ENCODE measurements at regions of chr12 and their contacts with region 1.

Region 1: DNA sequence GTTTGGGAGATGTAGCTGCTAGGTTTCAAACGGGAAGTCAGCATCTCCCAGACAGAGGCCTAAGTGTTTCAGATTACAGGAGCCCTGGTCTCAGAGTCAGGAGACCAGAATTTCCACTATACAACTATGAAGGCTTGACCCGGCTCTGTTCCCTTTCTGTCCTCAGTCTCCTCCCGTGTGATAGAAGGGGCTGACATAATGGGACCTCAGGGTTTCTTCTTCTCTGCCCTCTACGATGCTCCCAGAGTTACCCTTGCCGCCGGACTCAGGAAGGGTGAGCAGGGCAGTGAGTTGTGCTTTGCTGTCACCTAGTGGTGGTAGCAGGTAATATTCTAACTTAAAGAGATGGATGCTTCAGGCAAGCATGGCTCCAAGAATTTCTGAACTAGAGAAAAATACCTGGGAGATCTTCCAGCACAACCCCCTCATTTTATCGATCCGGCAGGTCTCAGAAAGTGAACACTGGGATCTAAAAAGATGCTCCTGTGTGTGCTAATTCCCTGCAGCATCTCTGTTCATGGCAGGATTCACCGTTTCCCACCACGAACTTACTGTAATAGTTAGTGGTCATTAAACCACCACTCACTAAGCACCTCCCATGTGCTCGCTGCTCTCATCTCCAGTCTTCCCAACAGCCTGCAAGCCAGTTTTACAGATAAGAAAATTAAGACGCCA is 84.4 kb downstream of the VWF start:
- DNase-seq: no peak
- ATAC-seq: peak; percentile 79

Region 2: GRCh38 chr12:5733136-5733755 is 306.8 kb before region 1 on chr12:
- intact Hi-C with region 1: no loop called
- DNase-seq: no peak
- ATAC-seq: no peak

Region 3: DNA sequence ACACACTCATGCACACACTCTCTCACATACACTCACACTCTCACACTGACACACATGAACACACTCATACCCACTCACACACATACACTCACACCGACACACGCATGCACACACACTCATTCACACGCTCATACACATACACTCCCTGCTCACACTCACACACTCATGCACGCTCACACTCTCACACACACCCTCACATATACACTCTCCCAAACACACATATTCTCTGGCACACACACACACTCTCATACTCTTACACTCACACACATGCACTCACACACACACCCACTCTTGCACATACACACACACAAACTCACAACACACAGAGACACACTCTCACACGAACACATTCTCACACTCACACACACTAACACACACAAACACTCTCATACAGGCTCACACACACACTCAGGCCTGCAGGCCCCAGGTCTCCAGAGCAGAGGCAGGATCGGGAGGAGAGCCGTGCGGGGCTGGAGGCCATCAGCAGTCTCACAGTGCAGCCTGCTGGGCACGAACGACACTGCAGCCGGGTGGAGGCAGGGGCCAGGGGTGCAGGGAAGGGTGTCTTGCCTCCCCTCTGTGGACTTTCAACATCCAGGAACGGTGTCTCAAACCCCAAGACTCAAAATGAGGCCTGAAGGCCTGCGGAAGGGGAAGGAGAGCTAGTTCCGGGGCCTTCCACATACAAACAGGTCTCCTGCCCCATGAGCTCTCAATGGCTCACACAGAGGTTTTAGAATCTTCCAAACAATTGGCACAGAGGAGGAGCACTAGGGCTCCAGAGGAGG is 243.7 kb before region 1 on chr12:
- intact Hi-C with region 1: no loop called
- DNase-seq: peak; percentile 64
- ATAC-seq: peak; percentile 70

Region 4: DNA sequence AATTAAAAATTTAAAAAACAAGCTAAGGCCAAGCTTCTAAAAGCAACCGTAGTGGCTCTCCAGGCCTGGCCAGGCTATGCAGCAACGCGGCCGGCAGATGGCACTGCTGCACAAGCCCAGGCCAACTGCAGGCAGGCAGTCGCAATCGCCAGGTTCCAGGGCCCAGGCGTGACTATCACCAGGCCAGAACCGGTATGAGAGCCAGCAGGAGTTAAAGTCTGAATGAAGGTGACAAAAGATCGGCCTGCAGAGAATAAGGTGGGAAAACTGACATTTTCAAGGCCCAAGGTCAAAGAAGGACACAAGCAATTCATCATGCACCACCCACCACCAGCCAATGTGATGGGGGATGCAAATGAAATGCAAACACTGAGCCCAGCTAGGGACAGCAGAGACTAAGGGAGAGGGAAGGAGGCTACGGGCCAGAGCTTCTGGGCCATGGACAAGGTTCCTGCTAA is 51.3 kb before region 1 on chr12:
- intact Hi-C with region 1: loop called (anchors 1 kb)
- DNase-seq: peak; percentile 92
- ATAC-seq: peak; percentile 90